ENCODE measurements at regions of chr3 and their contacts with region 1.

Region 1: DNA sequence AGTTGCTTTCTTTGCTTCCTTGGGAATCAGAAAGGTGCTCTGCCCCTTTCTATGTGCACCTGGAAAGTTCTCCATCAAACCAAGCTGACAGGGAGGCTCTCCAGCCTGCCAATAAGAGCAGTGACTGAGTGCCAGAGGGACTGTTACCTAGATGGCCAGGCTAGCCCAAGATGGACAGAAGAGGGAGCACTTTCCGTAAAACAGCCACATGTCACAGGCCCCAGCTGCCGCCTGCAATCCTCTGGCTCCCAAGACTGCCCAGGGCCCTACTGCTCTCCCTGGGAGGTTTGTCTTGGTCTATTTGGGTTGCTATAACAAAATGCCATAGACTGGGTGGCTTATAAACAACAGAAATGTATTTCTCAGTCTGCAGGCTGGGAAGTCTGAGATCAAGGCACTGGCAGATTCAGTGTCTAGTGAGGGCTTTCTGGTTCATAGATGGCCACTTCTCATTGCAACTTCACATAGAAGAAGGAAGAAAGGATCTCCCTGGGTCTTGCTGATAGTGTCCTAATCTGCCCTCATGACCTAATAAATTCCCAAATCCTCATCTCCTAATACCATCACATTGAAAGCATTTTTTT is 72.3 kb downstream of the TAMM41 start:
- DNase-seq: no peak
- H3K4me3 ChIP-seq: no peak overlapping the region
- CTCF ChIP-seq: peak; percentile 61

Region 2: DNA sequence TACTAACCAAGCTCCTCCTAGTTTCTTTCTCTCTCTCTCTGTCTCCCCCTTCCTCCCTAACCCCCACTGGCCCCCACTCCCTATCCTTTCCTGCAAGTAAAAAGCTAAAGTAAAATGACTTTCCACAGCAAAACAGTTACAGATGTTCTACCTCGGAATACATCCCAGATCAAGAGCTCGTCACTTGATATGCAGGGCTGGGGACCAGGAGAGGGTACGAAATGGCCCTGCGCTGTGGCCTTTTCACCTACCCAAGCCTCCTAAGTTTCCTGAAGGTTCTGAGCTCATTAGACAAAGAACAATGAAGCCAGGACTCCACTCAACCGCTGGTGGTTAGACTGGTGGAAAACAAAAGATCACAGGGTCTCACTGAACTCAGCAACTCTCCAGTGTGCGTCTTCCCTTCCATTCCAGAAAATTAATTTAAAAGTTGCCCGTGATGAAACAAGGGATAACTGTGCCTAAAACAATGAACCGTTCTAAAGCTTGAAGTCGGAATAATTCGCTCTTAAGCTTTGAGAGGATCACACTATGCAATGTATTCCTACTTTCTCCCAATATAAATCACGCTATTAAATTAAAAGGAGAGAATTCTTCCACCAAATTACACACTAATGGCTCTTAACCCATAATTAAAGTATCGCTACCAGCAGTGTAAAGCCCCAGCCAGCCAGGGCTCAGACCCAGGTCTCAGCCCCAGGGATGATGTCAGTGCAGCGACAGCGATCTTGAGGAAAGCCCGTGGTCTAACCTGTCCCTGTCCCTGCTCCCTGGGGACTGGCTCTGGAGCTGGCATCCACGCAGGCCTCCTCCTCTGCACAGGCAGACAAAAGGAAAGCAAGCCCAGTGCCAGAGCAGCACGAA is 135.7 kb before region 1 on chr3:
- CTCF ChIA-PET with region 1: no interaction called
- POLR2A ChIA-PET with region 1: no interaction called
- DNase-seq: no peak
- H3K4me3 ChIP-seq: peak overlapping the region; percentile 93
- CTCF ChIP-seq: no peak

Region 3: DNA sequence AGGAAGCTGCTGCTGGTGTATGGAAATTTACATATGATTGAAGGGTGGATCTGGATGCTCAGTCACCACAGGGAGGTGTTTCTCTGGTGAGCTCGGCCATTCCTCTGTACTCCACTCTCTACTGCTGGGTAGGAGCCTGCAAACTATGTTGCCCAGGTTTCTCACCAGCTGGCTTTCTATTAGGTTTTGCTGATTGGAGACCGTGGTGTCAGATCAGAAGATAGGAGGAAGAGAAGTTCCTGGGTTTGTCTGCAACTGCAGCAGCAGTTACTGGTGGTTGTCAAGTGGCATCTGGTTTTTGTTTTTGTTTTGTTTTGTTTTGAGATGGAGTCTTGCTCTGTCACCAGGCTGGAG is 10.6 kb after region 1 on chr3:
- CTCF ChIA-PET with region 1: interaction called, 20 read pairs
- POLR2A ChIA-PET with region 1: interaction called, 3 read pairs
- DNase-seq: no peak
- H3K4me3 ChIP-seq: no peak overlapping the region
- CTCF ChIP-seq: no peak

Region 4: GRCh38 chr3:12227833-12228232 is 453.4 kb after region 1 on chr3:
- CTCF ChIA-PET with region 1: no interaction called
- POLR2A ChIA-PET with region 1: no interaction called
- DNase-seq: peak; percentile 85
- H3K4me3 ChIP-seq: no peak overlapping the region
- CTCF ChIP-seq: no peak